ENCODE measurements at regions of chr18 and their contacts with region 1.

Region 1: GRCh38 chr18:11553098-11553940 is 56.1 kb upstream of the SLC35G4 start:
- DNase-seq: peak; percentile 23
- H3K4me3 ChIP-seq: no peak overlapping the region
- H3K27ac ChIP-seq: no peak overlapping the region
- H3K27me3 ChIP-seq: peaks cover 8% of the 10 kb centered on the region
- CTCF ChIP-seq: peak; percentile 97

Region 2: DNA sequence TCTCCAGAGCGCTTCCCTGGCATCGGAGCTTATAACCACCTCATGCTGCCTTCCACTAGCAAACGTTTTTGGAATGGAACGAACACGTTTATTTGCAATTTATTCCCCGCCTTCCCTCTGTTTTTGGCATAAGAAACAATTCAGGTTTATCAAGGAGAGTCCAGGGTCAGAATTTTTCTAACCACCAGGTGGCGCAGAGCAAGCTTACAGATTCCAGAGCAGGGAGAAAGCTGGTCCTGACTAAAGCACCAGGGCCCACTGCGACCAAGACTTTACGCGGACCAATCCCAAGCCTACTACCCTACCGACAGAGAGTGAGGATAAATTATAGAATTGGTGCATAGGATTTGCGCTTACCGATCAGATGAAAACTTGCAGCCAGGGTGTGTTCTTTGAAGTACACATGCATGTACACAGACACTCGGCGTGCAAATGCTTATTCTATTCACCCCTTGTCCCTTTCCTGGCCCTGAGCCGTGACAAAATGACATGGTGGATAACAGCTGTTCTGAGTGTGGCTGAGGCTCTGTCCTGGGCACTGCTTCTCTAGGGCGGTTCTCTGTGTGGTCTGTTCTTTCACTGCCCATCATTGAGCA is 992.8 kb before region 1 on chr18:
- CTCF ChIA-PET with region 1: interaction called, 36 read pairs
- POLR2A ChIA-PET with region 1: no interaction called
- DNase-seq: peak; percentile 53
- H3K4me3 ChIP-seq: peak overlapping the region; percentile 31; the same call in 1 of the 2 replicates
- H3K27ac ChIP-seq: no peak overlapping the region
- H3K27me3 ChIP-seq: no peaks in the 10 kb centered on the region
- CTCF ChIP-seq: peak; percentile 82

Region 3: GRCh38 chr18:10851824-10852319 is 701.4 kb before region 1 on chr18:
- CTCF ChIA-PET with region 1: interaction called, 33 read pairs
- POLR2A ChIA-PET with region 1: no interaction called
- DNase-seq: peak; percentile 33
- H3K4me3 ChIP-seq: no peak overlapping the region
- H3K27ac ChIP-seq: no peak overlapping the region
- H3K27me3 ChIP-seq: peaks cover 24% of the 10 kb centered on the region
- CTCF ChIP-seq: peak; percentile 82

Region 4: GRCh38 chr18:11163665-11164064 is 389.7 kb before region 1 on chr18:
- CTCF ChIA-PET with region 1: interaction called, 19 read pairs
- POLR2A ChIA-PET with region 1: no interaction called
- DNase-seq: no peak
- H3K4me3 ChIP-seq: no peak overlapping the region
- H3K27ac ChIP-seq: no peak overlapping the region
- H3K27me3 ChIP-seq: no peaks in the 10 kb centered on the region
- CTCF ChIP-seq: peak; percentile 67

Region 5: DNA sequence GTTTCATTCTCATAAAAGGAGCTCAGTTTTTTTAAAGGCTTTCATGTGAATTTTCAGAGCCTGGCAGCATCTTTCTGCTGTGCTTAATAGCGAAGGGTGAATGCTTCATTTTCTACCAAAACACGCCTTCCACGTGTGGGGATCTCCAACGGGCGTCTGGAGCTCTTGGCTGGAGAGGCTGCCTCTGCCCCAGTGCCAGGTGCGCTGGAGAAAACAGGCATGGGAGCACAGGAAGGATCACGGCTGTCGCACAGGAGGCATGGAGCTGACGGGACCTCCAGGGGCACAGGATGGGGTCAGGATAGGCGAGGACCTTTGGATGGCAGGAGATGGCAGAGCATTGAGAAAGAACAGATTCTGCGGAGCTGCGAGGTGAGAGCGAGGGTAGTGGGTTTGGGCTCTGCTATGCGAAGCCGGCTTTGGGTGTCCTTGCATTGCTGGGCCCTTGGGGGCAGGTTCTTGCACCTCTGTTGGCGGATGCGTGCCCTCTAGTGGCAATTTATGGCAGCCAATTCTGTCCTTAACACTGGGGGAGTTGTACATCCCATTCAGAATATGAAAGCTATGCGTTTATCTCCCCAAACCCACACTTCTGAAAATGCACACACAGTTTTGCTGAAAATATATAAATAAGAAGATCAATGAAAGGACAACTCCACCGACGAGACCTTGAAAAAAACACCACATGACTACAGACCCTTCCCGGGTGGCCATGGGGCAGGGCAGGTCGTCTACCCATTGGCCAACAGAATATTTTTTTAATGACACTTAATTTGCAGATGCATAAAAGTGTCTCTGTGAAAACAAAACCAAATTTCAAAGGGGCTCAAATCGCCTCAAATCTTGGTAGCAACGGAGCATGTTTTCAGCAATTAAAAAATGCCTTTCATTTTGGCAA is 34.3 kb before region 1 on chr18:
- CTCF ChIA-PET with region 1: interaction called, 16 read pairs
- POLR2A ChIA-PET with region 1: no interaction called
- DNase-seq: peak; percentile 20
- H3K4me3 ChIP-seq: no peak overlapping the region
- H3K27ac ChIP-seq: no peak overlapping the region
- H3K27me3 ChIP-seq: no peaks in the 10 kb centered on the region
- CTCF ChIP-seq: peak; percentile 73

Region 6: DNA sequence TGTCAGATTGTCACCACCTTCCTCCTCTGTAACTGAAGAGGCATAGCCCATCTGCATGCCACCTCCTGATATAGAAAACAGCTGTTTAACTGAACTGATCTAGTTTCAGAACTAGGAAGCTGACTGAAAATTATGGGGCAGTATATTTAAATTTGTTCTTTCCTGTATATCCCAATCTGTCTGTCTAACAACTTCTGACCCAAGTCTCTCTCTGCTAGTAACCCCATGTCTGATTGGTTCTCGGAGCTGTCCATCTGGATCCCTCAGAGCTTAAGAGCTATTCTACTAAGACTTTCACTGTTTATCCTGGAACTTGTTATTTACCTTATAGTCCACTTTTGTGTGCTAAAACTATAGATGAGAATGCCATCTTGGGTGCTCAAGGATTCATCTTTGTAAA is 12.1 kb before region 1 on chr18:
- CTCF ChIA-PET with region 1: interaction called, 25 read pairs
- POLR2A ChIA-PET with region 1: no interaction called
- DNase-seq: no peak
- H3K4me3 ChIP-seq: no peak overlapping the region
- H3K27ac ChIP-seq: no peak overlapping the region
- H3K27me3 ChIP-seq: peaks cover 2% of the 10 kb centered on the region
- CTCF ChIP-seq: no peak